ENCODE measurements at regions of chr2 and their contacts with region 1.

Region 1: GRCh38 chr2:113203901-113204519 is 30.2 kb downstream of the PSD4 start:
- DNase-seq: peak; percentile 85
- CTCF ChIP-seq: peak; percentile 86

Region 2: GRCh38 chr2:113080134-113080533 is 123.9 kb before region 1 on chr2:
- in situ Hi-C with region 1: loop called (anchors 10 kb)
- DNase-seq: peak; percentile 46
- CTCF ChIP-seq: peak; percentile 92

Region 3: DNA sequence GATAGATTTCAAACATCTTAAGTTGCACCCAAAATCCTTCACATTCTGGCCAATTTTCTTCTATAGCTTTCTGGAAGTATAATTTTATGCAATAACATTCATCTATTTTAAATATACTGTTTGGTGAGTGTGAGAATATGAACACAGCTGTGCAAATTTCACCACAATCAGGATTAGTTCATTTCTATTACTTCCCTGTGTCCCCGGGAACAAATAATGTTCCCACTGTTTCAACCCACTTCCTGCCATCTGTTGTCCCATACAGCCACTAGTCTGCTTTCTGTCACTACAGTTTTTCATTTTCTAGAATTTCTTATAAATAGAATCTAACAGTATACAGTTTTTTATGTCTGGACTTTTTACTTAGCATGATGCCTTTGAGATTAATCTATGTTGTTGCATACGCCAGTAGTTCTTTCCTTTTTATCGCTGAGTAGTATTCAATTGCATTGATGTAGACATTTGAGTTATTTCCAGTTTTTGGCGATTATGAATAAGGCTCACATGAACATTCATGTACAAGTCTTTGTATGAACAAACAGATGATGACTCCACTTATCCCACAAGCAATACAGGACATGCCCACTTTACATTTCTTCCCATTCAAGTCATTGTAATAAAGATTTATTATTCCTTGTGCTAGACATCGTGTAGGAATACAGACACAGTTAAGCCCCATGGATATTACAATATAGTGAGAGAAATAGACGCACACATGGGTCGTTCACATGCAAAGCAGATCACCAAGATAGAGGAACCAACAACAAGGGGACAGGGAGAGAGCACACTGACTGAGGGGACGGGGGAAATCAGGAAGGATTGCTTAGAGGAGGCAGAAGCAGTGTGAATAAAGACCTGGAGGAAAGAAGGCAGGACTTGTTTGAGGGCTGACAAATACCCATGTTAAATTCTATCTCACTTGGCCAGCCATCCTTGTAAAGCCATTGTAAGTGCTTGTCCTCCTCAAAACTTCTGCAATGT is 147.7 kb after region 1 on chr2:
- in situ Hi-C with region 1: no loop called
- DNase-seq: no peak
- CTCF ChIP-seq: no peak

Region 4: GRCh38 chr2:114011713-114012112 is 807.7 kb after region 1 on chr2:
- in situ Hi-C with region 1: no loop called
- DNase-seq: no peak
- CTCF ChIP-seq: no peak